ENCODE measurements at regions of chr2 and their contacts with region 1.

Region 1: DNA sequence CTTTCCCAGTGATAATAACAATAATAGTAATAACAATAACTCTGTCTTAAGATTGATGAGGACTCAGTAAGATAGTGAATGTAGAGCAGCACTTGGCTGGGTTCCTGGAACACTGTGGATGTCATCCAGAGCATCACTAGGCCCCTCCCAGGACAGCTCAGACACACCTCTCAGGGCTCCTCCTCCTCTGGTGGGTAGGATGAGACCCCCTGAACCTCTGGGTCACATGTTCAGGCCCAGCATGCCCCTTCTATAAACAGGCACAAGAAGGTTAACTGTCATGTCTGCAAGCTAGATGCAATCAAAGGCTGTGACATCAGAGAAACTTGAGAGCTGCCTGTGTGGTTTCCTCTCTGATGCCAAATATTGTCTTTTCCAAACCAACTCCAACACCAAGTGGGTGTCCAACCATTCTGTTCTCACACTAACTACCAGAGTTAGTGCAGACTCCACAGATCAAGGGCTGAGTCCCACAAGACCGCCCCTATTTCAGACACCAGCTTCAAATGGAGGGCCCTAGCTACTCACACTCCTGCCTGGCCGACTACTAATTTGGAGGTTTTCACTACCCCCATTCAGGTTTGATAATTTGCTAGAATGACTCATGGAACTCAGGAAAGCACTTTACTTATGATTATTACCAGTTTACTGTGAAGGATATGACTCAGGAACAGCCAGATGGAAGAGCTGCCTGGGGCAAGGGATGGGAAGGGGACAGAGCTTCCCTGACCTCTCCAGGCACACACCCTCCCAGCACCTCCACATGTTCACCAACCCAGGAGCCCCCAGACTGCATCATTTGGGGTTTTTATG is 46.4 kb upstream of the BZW1 start:
- DNase-seq: no peak
- H3K4me3 ChIP-seq: no peak overlapping the region
- H3K4me3 Mint-ChIP-seq: no peak overlapping the region
- H3K27ac Mint-ChIP-seq: no peak overlapping the region
- H3K4me1 ChIP-seq: peaks cover 42% of the 10 kb centered on the region
- H3K4me1 Mint-ChIP-seq: peaks cover 46% of the 10 kb centered on the region
- H3K27me3 ChIP-seq: no peaks in the 10 kb centered on the region
- H3K27me3 Mint-ChIP-seq: no peaks in the 10 kb centered on the region
- CTCF ChIP-seq: no peak

Region 2: DNA sequence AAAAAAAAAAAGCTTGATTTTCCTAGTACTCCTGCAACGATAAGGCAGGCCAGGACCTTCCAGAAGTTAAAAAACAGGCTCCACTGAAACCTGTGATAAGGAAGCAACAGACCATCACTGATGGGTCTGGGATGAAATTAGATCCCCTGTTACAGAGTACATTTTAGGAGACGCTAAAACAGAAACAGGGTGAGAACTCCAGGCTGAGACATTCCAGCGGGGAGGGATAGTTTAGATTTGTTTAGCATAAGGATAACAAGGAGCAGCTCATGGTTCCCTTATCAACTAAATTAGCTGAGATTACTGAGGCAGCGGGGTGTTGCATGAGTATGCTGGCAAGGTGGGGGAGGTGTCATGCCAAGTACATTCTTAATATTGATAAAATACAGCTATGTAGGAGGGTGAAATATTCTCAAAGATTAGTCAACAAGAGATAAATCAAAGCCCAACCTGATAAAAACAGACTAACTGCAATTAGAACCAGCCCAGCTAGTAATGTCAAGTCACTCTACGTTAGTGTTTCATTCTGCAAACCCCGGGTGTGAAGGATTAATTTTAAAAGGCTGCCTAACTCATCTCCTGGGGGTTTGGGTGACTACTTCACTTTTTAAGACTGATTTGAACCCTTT is 28.6 kb before region 1 on chr2:
- CTCF ChIA-PET with region 1: no interaction called
- POLR2A ChIA-PET with region 1: no interaction called
- intact Hi-C with region 1: no loop called
- DNase-seq: no peak
- H3K4me3 ChIP-seq: no peak overlapping the region
- H3K4me3 Mint-ChIP-seq: no peak overlapping the region
- H3K27ac Mint-ChIP-seq: no peak overlapping the region
- H3K4me1 ChIP-seq: peaks cover 14% of the 10 kb centered on the region
- H3K4me1 Mint-ChIP-seq: peaks cover 23% of the 10 kb centered on the region
- H3K27me3 ChIP-seq: no peaks in the 10 kb centered on the region
- H3K27me3 Mint-ChIP-seq: no peaks in the 10 kb centered on the region
- CTCF ChIP-seq: no peak

Region 3: DNA sequence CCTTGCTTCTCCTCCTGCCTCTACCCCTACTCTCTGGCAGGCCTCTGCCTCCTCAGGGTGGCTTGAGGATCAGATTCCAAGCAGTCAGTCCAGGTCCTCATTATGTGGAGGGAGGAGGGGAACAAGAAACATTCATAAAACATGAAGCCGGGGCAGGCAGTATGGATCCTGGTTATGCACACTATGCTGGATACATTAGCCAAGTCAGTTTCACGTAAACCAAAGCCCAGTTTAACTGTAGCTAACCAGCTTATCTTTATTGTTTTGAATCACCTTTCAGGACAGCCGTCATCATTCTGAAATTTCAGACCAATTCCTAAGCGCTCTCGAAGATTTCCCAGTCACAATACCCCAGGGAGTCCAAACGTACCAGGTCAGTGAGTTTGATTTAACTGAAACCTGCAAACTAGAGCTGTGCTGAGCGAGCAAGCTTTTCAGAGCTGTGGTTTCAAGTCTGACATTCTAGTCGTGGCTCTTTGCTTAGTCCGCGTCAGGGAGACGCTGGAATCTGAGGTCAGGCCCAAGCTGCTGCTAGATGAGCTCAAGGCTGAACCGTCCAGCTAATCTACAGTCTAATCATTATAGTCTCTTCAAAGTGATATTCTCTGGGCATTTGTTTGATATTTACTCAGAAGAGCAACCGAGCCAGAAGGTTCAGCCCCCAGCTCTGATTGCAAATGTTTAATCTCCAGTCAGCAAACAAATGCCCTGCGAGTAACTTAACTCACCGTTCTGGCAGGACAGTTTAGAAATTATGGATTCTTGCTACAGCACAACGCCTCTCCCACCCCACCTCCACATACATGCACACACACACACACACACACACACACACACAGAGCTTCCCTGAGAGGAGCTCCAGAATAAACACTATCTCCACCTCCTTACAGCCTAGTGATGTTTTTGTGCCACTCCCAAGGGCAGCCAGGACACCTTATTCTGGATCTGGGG is 17.4 kb before region 1 on chr2:
- CTCF ChIA-PET with region 1: interaction called, 8 read pairs
- POLR2A ChIA-PET with region 1: no interaction called
- intact Hi-C with region 1: loop called (anchors 1 kb)
- DNase-seq: peak; percentile 77 to 87
- H3K4me3 ChIP-seq: no peak overlapping the region
- H3K4me3 Mint-ChIP-seq: peak overlapping the region; percentile 63
- H3K27ac Mint-ChIP-seq: peak overlapping the region; percentile 90
- H3K4me1 ChIP-seq: peaks cover 50% of the 10 kb centered on the region
- H3K4me1 Mint-ChIP-seq: peaks cover 32% of the 10 kb centered on the region
- H3K27me3 ChIP-seq: no peaks in the 10 kb centered on the region
- H3K27me3 Mint-ChIP-seq: no peaks in the 10 kb centered on the region
- CTCF ChIP-seq: no peak

Region 4: DNA sequence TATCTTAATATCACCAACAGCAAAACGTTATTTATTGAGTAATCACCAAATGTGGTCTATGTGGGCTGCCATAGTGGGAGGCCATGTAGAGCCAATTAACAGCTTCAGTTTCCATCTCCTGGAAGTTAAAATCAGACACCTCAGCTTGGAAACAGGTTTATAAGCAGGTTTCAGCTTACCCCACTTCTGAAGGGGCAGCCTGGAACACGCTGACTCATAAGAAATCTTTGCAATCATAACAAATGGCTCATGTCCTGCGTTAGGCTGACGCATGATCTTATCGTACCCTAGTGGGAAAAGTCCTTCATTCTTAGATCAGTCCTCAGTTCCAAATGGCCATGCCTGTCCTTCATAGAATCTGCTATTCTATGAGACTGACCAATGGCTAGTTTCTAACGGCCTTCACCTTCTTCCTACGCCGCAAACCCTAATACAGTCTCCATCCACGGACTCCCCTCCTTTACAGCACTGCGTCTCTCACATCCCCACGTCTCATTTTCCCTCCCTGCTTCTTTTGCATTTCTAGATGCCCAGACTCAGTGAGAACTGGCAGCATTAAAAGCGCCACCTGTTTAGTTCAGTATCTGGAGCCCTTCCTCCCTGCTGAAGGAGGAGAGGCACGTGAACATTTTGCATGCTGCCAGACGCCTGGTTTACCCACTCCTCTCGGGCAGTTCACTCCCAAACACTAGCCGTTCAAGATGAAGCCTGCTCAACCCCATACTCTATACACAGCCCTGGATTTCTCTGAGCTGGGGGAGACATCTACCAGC is 22.2 kb after region 1 on chr2:
- CTCF ChIA-PET with region 1: interaction called, 6 read pairs
- POLR2A ChIA-PET with region 1: interaction called, 3 read pairs
- intact Hi-C with region 1: loop called (anchors 2 kb)
- DNase-seq: no peak
- H3K4me3 ChIP-seq: no peak overlapping the region
- H3K4me3 Mint-ChIP-seq: no peak overlapping the region
- H3K27ac Mint-ChIP-seq: no peak overlapping the region
- H3K4me1 ChIP-seq: peaks cover 13% of the 10 kb centered on the region
- H3K4me1 Mint-ChIP-seq: peaks cover 6% of the 10 kb centered on the region
- H3K27me3 ChIP-seq: no peaks in the 10 kb centered on the region
- H3K27me3 Mint-ChIP-seq: no peaks in the 10 kb centered on the region
- CTCF ChIP-seq: no peak

Region 5: DNA sequence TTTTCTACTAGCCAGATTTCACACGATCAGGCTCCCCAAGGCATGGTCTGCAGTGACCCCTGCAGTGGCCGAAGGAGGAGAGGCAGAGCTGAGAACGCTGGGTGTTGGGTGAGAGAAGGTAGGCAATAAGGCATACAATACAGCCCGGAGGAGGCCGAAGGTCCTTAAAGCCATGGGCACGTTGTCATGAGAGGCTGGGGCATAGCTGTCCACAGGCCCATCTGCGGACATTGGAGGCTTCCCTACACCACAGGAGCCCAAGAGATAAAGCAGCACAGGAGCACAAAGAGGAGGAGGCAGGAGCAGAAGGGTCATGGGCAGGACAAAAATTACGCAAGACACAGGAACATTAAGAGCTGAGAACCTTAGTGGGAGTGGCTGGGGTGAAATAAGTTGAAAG is 29.7 kb after region 1 on chr2:
- CTCF ChIA-PET with region 1: interaction called, 6 read pairs
- POLR2A ChIA-PET with region 1: interaction called, 11 read pairs
- intact Hi-C with region 1: no loop called
- DNase-seq: peak; percentile 52 to 57
- H3K4me3 ChIP-seq: no peak overlapping the region
- H3K4me3 Mint-ChIP-seq: no peak overlapping the region
- H3K27ac Mint-ChIP-seq: no peak overlapping the region
- H3K4me1 ChIP-seq: 0 out of 2 replicates have a peak, but pooled peaks cover 6% of the 10 kb centered on the region
- H3K4me1 Mint-ChIP-seq: peaks cover 21% of the 10 kb centered on the region
- H3K27me3 ChIP-seq: no peaks in the 10 kb centered on the region
- H3K27me3 Mint-ChIP-seq: no peaks in the 10 kb centered on the region
- CTCF ChIP-seq: peak in 1 of 2 experiments; percentile 50

Region 6: GRCh38 chr2:200811336-200812121 is 46.2 kb after region 1 on chr2 and contains the start of gene BZW1:
- CTCF ChIA-PET with region 1: no interaction called
- POLR2A ChIA-PET with region 1: no interaction called
- intact Hi-C with region 1: no loop called
- DNase-seq: peak; percentile 97 to 98
- H3K4me3 ChIP-seq: peak within 1 kb of the TSS; percentile 99
- H3K4me3 Mint-ChIP-seq: peak within 1 kb of the TSS; percentile 89
- H3K27ac Mint-ChIP-seq: peak within 1 kb of the TSS; percentile 98
- H3K4me1 ChIP-seq: peaks cover 22% of the 10 kb centered on the region
- H3K4me1 Mint-ChIP-seq: peaks cover 16% of the 10 kb centered on the region
- H3K27me3 ChIP-seq: no peaks in the 10 kb centered on the region
- H3K27me3 Mint-ChIP-seq: no peaks in the 10 kb centered on the region
- CTCF ChIP-seq: no peak
- total RNA-seq, gene BZW1: 322 and 325 TPM in 2 replicates

Measured in Caco-2 (cell line).